ENCODE measurements at regions of chr18 and their contacts with region 1.

Region 1: GRCh38 chr18:79246348-79247108 is 149.2 kb upstream of the NFATC1 start:
- DNase-seq: peak; percentile 44 to 79 (median 66)
- ATAC-seq: peak; percentile 90
- H3K4me3 ChIP-seq: no peak overlapping the region
- H3K4me3 Mint-ChIP-seq: peak overlapping the region; percentile 49
- H3K27ac ChIP-seq: peak overlapping the region in 1 of 2 experiments; percentile 5
- H3K27ac Mint-ChIP-seq: peak overlapping the region; percentile 56
- H3K4me1 ChIP-seq: no peaks in the 10 kb centered on the region
- H3K4me1 Mint-ChIP-seq: peaks cover 8% of the 10 kb centered on the region
- H3K27me3 ChIP-seq: no peaks in the 10 kb centered on the region
- H3K27me3 Mint-ChIP-seq: no peaks in the 10 kb centered on the region
- CTCF ChIP-seq: peak; percentile 97

Region 2: GRCh38 chr18:77899972-77900754 is 1346.4 kb before region 1 on chr18:
- CTCF ChIA-PET with region 1: interaction called, 3 read pairs
- POLR2A ChIA-PET with region 1: no interaction called
- intact Hi-C with region 1: loop called in 1 of 2 experiments (anchors 5 kb)
- DNase-seq: peak in 8 of 9 experiments; percentile 26 to 73 (median 47)
- ATAC-seq: peak; percentile 97
- H3K4me3 ChIP-seq: peak overlapping the region; percentile 6 to 46
- H3K4me3 Mint-ChIP-seq: peak overlapping the region; percentile 49
- H3K27ac ChIP-seq: no peak overlapping the region
- H3K27ac Mint-ChIP-seq: no peak overlapping the region
- H3K4me1 ChIP-seq: peaks cover 5% of the 10 kb centered on the region
- H3K4me1 Mint-ChIP-seq: peaks cover 6% of the 10 kb centered on the region
- H3K27me3 ChIP-seq: no peaks in the 10 kb centered on the region
- H3K27me3 Mint-ChIP-seq: peaks cover 23% of the 10 kb centered on the region
- CTCF ChIP-seq: peak; percentile 67

Region 3: GRCh38 chr18:78875268-78875997 is 371.1 kb before region 1 on chr18:
- CTCF ChIA-PET with region 1: interaction called, 3 read pairs
- POLR2A ChIA-PET with region 1: no interaction called
- intact Hi-C with region 1: loop called in 1 of 2 experiments (anchors 2 kb)
- DNase-seq: peak in 5 of 9 experiments; percentile 3 to 30 (median 24)
- ATAC-seq: no peak
- H3K4me3 ChIP-seq: no peak overlapping the region
- H3K4me3 Mint-ChIP-seq: no peak overlapping the region
- H3K27ac ChIP-seq: no peak overlapping the region
- H3K27ac Mint-ChIP-seq: no peak overlapping the region
- H3K4me1 ChIP-seq: no peaks in the 10 kb centered on the region
- H3K4me1 Mint-ChIP-seq: no peaks in the 10 kb centered on the region
- H3K27me3 ChIP-seq: no peaks in the 10 kb centered on the region
- H3K27me3 Mint-ChIP-seq: peaks cover 25% of the 10 kb centered on the region
- CTCF ChIP-seq: peak; percentile 16

Region 4: GRCh38 chr18:78984941-78985784 is 261.4 kb before region 1 on chr18:
- CTCF ChIA-PET with region 1: no interaction called
- POLR2A ChIA-PET with region 1: no interaction called
- intact Hi-C with region 1: loop called (anchors 5 to 10 kb)
- DNase-seq: peak in 1 of 9 experiments; percentile 31
- ATAC-seq: no peak
- H3K4me3 ChIP-seq: no peak overlapping the region
- H3K4me3 Mint-ChIP-seq: no peak overlapping the region
- H3K27ac ChIP-seq: no peak overlapping the region
- H3K27ac Mint-ChIP-seq: no peak overlapping the region
- H3K4me1 ChIP-seq: no peaks in the 10 kb centered on the region
- H3K4me1 Mint-ChIP-seq: peaks cover 14% of the 10 kb centered on the region
- H3K27me3 ChIP-seq: peaks cover 6 to 13% of the 10 kb centered on the region in 2 experiments
- H3K27me3 Mint-ChIP-seq: peaks cover 67% of the 10 kb centered on the region
- CTCF ChIP-seq: no peak

Region 5: GRCh38 chr18:79123948-79124347 is 122.6 kb before region 1 on chr18:
- CTCF ChIA-PET with region 1: no interaction called
- POLR2A ChIA-PET with region 1: no interaction called
- intact Hi-C with region 1: no loop called
- DNase-seq: no peak
- ATAC-seq: no peak
- H3K4me3 ChIP-seq: no peak overlapping the region
- H3K4me3 Mint-ChIP-seq: no peak overlapping the region
- H3K27ac ChIP-seq: no peak overlapping the region
- H3K27ac Mint-ChIP-seq: no peak overlapping the region
- H3K4me1 ChIP-seq: no peaks in the 10 kb centered on the region
- H3K4me1 Mint-ChIP-seq: no peaks in the 10 kb centered on the region
- H3K27me3 ChIP-seq: no peaks in the 10 kb centered on the region
- H3K27me3 Mint-ChIP-seq: no peaks in the 10 kb centered on the region
- CTCF ChIP-seq: no peak

Region 6: GRCh38 chr18:79208906-79209305 is 37.6 kb before region 1 on chr18:
- CTCF ChIA-PET with region 1: no interaction called
- POLR2A ChIA-PET with region 1: no interaction called
- intact Hi-C with region 1: no loop called
- DNase-seq: no peak
- ATAC-seq: no peak
- H3K4me3 ChIP-seq: no peak overlapping the region
- H3K4me3 Mint-ChIP-seq: no peak overlapping the region
- H3K27ac ChIP-seq: no peak overlapping the region
- H3K27ac Mint-ChIP-seq: no peak overlapping the region
- H3K4me1 ChIP-seq: no peaks in the 10 kb centered on the region
- H3K4me1 Mint-ChIP-seq: peaks cover 7% of the 10 kb centered on the region
- H3K27me3 ChIP-seq: no peaks in the 10 kb centered on the region
- H3K27me3 Mint-ChIP-seq: no peaks in the 10 kb centered on the region
- CTCF ChIP-seq: no peak

Region 7: DNA sequence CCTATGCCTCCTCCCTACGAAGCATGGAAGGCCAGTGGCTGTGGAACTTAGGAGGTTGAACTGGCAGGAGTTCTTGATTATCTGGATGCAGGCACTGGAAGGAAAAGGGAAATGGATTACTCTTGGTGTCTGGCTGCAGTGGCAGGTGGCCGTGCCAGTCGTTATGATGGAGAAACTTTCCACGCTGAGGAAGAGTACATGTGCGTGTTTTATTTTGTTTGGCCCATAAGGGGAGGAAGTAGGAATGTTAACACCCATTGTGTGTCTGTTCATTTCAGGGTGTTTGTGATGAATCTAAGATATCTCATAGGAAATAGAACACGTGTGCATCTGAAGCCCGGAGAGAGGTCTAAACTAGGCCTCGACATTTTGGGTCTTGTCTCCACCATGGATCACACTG is 26.4 kb after region 1 on chr18:
- CTCF ChIA-PET with region 1: no interaction called
- POLR2A ChIA-PET with region 1: no interaction called
- intact Hi-C with region 1: no loop called
- DNase-seq: no peak
- ATAC-seq: no peak
- H3K4me3 ChIP-seq: no peak overlapping the region
- H3K4me3 Mint-ChIP-seq: no peak overlapping the region
- H3K27ac ChIP-seq: no peak overlapping the region
- H3K27ac Mint-ChIP-seq: no peak overlapping the region
- H3K4me1 ChIP-seq: no peaks in the 10 kb centered on the region
- H3K4me1 Mint-ChIP-seq: peaks cover 1% of the 10 kb centered on the region
- H3K27me3 ChIP-seq: no peaks in the 10 kb centered on the region
- H3K27me3 Mint-ChIP-seq: no peaks in the 10 kb centered on the region
- CTCF ChIP-seq: no peak